Activated CD8-positive, alpha-beta T cell treated with anti-CD3 and anti-CD28 coated beads for 36 hours (primary cell): ENCODE measurements at regions of chr21 and their contacts with region 1.

Region 1: DNA sequence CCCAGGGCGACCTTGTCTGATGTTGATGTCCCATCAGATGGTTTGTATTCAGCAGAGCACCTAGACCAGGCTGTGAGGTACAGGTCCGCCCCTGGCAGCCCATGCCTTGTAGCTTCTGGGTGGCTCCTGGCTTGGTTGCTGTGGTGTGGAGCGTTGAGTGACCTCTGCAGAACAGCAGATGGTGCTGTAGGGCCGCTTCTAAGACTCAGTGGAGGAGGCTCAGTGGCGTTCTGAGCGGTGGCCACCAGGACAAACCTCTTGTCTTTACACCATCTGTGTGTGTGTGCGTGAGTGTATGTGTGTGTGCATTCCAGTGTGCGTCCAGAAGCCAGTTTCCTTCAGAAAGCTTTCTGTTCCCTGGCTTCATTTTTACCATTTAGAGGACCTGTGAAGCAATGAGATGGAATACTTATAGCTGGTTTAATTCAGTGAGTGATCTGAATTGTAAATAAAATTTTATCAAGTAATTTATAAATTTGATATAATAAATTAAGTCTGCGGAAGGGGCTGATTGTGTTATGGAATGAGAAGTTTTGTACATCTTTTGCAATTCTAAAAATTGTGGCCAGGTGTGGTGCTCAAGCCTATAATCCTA is 66.1 kb downstream of the ADARB1 start:
- DNase-seq: peak; percentile 81
- ATAC-seq: peak; percentile 92
- H3K4me3 Mint-ChIP-seq: no peak overlapping the region
- H3K27ac Mint-ChIP-seq: no peak overlapping the region
- H3K4me1 Mint-ChIP-seq: no peaks in the 10 kb centered on the region
- H3K27me3 Mint-ChIP-seq: no peaks in the 10 kb centered on the region
- CTCF ChIP-seq: peak; percentile 67

Region 2: GRCh38 chr21:44962403-44962966 is 178.0 kb before region 1 on chr21:
- CTCF ChIA-PET with region 1: interaction called, 24 read pairs
- POLR2A ChIA-PET with region 1: no interaction called
- intact Hi-C with region 1: no loop called
- DNase-seq: no peak
- ATAC-seq: no peak
- H3K4me3 Mint-ChIP-seq: no peak overlapping the region
- H3K27ac Mint-ChIP-seq: no peak overlapping the region
- H3K4me1 Mint-ChIP-seq: peaks cover 28% of the 10 kb centered on the region
- H3K27me3 Mint-ChIP-seq: no peaks in the 10 kb centered on the region
- CTCF ChIP-seq: no peak

Region 3: GRCh38 chr21:45074048-45074817 is 66.2 kb before region 1 on chr21 and contains the start of gene ADARB1:
- CTCF ChIA-PET with region 1: interaction called, 53 read pairs
- POLR2A ChIA-PET with region 1: no interaction called
- intact Hi-C with region 1: loop called (anchors 10 kb)
- DNase-seq: peak; percentile 56
- ATAC-seq: peak; percentile 40
- H3K4me3 Mint-ChIP-seq: peak within 1 kb of the TSS; percentile 87
- H3K27ac Mint-ChIP-seq: peak within 1 kb of the TSS; percentile 87
- H3K4me1 Mint-ChIP-seq: peaks cover 39% of the 10 kb centered on the region
- H3K27me3 Mint-ChIP-seq: no peaks in the 10 kb centered on the region
- CTCF ChIP-seq: no peak
- total RNA-seq, gene ADARB1: 36.2 to 37.1 TPM

Region 4: DNA sequence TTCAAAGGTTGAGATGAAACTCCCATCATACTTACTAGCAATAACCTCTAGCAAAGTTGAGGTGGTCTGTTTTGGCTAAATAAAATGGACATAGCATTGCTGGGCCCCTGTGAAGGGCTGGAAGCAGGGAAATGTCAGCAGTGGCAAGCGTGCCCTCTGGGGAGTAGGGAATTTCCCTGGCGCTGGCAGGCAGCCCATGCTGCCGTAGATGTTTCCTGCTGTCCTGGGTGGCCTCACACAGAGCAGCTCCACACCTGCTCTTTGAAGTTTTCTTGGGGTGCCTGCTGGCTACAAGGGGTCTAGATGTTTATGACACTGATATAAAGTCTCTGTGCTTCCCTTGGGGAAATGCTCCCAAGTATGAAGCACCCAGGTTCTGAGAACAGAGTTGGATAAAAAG is 35.9 kb before region 1 on chr21:
- CTCF ChIA-PET with region 1: interaction called, 34 read pairs
- POLR2A ChIA-PET with region 1: no interaction called
- intact Hi-C with region 1: no loop called
- DNase-seq: peak; percentile 62
- ATAC-seq: peak; percentile 82
- H3K4me3 Mint-ChIP-seq: peak overlapping the region; percentile 33
- H3K27ac Mint-ChIP-seq: peak overlapping the region; percentile 40
- H3K4me1 Mint-ChIP-seq: peaks cover 57% of the 10 kb centered on the region
- H3K27me3 Mint-ChIP-seq: no peaks in the 10 kb centered on the region
- CTCF ChIP-seq: no peak

Region 5: GRCh38 chr21:45130324-45130774 is 10.1 kb before region 1 on chr21:
- CTCF ChIA-PET with region 1: interaction called, 152 read pairs
- POLR2A ChIA-PET with region 1: interaction called, 4 read pairs
- intact Hi-C with region 1: no loop called
- DNase-seq: no peak
- ATAC-seq: no peak
- H3K4me3 Mint-ChIP-seq: no peak overlapping the region
- H3K27ac Mint-ChIP-seq: no peak overlapping the region
- H3K4me1 Mint-ChIP-seq: peaks cover 29% of the 10 kb centered on the region
- H3K27me3 Mint-ChIP-seq: no peaks in the 10 kb centered on the region
- CTCF ChIP-seq: no peak

Region 6: DNA sequence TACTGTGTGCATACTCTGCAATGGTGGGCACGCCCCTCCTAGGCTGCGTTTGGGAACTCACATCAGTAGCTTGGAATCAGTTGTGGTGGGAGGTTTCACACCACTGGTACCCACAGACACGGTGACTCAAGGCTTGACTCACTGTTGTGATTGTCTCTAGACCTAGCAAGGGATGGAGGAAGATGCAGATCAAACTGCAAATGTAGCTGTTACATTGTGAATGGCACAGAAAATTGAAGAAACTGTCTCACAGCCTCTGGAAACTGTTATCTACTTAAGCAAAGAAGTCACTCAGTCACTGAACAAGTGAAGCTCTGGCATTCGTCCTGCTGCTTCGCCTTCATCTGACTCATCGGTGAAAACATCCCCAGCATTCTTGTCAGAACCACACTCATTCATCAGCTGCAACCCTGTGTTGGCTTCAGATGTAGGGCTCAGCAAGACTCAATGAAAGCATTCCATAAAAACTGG is 87.8 kb after region 1 on chr21:
- CTCF ChIA-PET with region 1: interaction called, 12 read pairs
- POLR2A ChIA-PET with region 1: interaction called, 5 read pairs
- intact Hi-C with region 1: no loop called
- DNase-seq: peak; percentile 92
- ATAC-seq: peak; percentile 90
- H3K4me3 Mint-ChIP-seq: no peak overlapping the region
- H3K27ac Mint-ChIP-seq: peak overlapping the region; percentile 77
- H3K4me1 Mint-ChIP-seq: peaks cover 41% of the 10 kb centered on the region
- H3K27me3 Mint-ChIP-seq: no peaks in the 10 kb centered on the region
- CTCF ChIP-seq: no peak

Region 7: GRCh38 chr21:45248893-45249381 is 108.5 kb after region 1 on chr21:
- CTCF ChIA-PET with region 1: no interaction called
- POLR2A ChIA-PET with region 1: no interaction called
- intact Hi-C with region 1: no loop called
- DNase-seq: no peak
- ATAC-seq: no peak
- H3K4me3 Mint-ChIP-seq: no peak overlapping the region
- H3K27ac Mint-ChIP-seq: no peak overlapping the region
- H3K4me1 Mint-ChIP-seq: no peaks in the 10 kb centered on the region
- H3K27me3 Mint-ChIP-seq: no peaks in the 10 kb centered on the region
- CTCF ChIP-seq: no peak

Region 8: GRCh38 chr21:46334351-46335140 is 1194.1 kb after region 1 on chr21:
- CTCF ChIA-PET with region 1: no interaction called
- POLR2A ChIA-PET with region 1: no interaction called
- intact Hi-C with region 1: no loop called
- DNase-seq: no peak
- ATAC-seq: no peak
- H3K4me3 Mint-ChIP-seq: no peak overlapping the region
- H3K27ac Mint-ChIP-seq: no peak overlapping the region
- H3K4me1 Mint-ChIP-seq: no peaks in the 10 kb centered on the region
- H3K27me3 Mint-ChIP-seq: no peaks in the 10 kb centered on the region
- CTCF ChIP-seq: no peak